ENCODE measurements at regions of chr10 and their contacts with region 1.

Region 1: DNA sequence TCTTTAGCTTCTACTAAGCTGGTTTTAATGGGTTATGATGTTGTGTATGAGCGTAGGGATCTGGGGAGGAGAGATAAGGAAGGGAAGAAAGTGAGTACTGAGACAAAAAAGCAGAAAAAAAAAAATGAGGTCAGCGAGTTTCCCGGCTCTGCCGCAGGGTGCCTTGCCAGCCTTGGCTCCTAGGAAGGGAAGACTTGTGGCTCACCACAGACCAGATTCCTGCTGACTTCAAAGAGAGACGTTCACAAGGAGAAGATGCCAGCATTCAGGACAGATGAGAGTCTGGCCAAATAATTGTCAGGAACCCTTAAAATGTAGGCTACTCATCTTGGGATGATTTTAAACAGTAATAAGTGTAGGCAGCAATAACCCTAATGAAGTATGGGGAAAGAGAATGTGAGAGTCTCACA is 11.4 kb upstream of the FAS start:
- DNase-seq: peak; percentile 45 to 65 (median 47)
- H3K4me3 ChIP-seq: peak overlapping the region in 1 of 7 experiments; percentile 54
- H3K27ac ChIP-seq: no peak overlapping the region
- H3K4me1 ChIP-seq: peaks cover 6 to 27% (median 19%) of the 10 kb centered on the region in 4 experiments
- H3K27me3 ChIP-seq: no peaks in the 10 kb centered on the region

Region 2: DNA sequence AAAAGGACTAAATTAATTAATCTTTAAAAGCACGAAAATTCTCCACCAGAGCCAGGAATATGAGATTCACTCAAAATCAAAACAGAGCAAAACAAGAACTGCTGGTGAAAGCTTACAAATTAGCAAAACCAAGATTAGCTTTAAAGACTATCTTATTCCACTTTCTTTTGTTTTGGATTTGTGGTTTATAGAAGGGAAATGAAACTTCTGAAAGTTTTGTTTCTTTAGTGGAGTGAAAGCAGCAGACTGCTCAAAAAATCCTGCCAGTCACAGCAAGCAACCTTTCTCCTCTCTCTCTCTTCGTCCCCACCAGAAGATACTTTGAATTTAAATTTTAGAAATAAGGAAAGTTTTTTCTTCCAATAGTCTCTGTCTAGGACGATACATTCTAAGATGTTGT is 34.3 kb before region 1 on chr10:
- CTCF ChIA-PET with region 1: no interaction called
- POLR2A ChIA-PET with region 1: no interaction called
- DNase-seq: no peak
- H3K4me3 ChIP-seq: no peak overlapping the region
- H3K27ac ChIP-seq: no peak overlapping the region
- H3K4me1 ChIP-seq: peaks cover 0 to 7% (median 1%) of the 10 kb centered on the region in 4 experiments
- H3K27me3 ChIP-seq: no peaks in the 10 kb centered on the region

Region 3: DNA sequence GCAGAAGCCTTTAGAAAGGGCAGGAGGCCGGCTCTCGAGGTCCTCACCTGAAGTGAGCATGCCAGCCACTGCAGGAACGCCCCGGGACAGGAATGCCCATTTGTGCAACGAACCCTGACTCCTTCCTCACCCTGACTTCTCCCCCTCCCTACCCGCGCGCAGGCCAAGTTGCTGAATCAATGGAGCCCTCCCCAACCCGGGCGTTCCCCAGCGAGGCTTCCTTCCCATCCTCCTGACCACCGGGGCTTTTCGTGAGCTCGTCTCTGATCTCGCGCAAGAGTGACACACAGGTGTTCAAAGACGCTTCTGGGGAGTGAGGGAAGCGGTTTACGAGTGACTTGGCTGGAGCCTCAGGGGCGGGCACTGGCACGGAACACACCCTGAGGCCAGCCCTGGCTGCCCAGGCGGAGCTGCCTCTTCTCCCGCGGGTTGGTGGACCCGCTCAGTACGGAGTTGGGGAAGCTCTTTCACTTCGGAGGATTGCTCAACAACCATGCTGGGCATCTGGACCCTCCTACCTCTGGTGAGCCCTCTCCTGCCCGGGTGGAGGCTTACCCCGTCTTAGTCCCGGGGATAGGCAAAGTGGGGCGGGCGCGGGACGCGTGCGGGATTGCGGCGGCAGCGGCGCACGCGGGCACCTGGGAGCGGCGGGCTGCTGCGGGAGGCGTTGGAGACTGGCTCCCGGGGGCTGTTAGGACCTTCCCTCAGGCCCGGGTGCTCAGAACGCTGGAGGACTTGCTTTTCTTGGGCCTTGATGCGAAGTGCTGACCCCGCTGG is 11.4 kb after region 1 on chr10 and contains the start of gene FAS:
- CTCF ChIA-PET with region 1: interaction called, 17 read pairs
- POLR2A ChIA-PET with region 1: no interaction called
- DNase-seq: peak; percentile 48 to 75 (median 74)
- H3K4me3 ChIP-seq: peak within 1 kb of the TSS; percentile 75 to 98 (median 94)
- H3K27ac ChIP-seq: peak within 1 kb of the TSS; percentile 48 to 88
- H3K4me1 ChIP-seq: peaks cover 16 to 55% (median 36%) of the 10 kb centered on the region in 4 experiments
- H3K27me3 ChIP-seq: no peaks in the 10 kb centered on the region